AG04449 (cell line): ENCODE measurements at regions of chr11 and their contacts with region 1.

Region 1: GRCh38 chr11:119205574-119206510 is at the start of gene CBL:
- DNase-seq: no peak
- H3K4me3 ChIP-seq: peak within 1 kb of the TSS; percentile 91
- CTCF ChIP-seq: peak; percentile 92

Region 2: DNA sequence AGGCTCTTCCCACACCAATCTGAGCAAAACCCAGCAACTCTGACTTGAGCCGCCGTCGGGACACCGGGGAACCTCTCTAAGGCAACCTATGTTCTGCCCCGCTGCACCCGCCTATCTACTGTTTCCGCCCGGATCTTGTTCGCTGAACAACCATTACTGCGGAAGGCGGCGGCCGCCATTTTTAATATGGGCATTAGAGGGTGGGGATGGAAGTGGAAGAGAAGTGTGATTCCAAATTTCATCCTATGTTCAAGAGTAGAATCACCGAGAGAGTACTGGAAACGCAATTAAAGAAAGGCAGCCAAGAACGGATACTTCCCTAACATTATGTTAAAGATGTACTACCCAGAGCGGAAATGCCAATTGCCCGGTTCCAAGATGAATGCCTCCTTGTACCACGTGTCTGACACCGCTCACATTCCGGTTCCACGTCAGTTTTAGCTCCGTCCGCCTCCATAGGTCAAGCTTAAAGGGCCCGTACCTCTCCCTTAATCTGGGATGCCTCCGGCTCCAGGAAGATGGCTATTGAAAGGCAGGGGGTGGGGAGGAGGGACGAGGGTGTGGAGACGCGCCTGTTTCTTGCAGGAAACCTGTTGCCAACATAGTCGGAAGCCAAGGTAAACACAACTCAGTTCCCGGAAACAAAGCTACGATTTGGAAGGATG is 104.0 kb before region 1 on chr11 and contains the start of gene DPAGT1:
- CTCF ChIA-PET with region 1: interaction called, 23 read pairs
- POLR2A ChIA-PET with region 1: no interaction called
- DNase-seq: peak; percentile 82
- H3K4me3 ChIP-seq: peak within 1 kb of the TSS; percentile 88
- CTCF ChIP-seq: no peak

Region 3: DNA sequence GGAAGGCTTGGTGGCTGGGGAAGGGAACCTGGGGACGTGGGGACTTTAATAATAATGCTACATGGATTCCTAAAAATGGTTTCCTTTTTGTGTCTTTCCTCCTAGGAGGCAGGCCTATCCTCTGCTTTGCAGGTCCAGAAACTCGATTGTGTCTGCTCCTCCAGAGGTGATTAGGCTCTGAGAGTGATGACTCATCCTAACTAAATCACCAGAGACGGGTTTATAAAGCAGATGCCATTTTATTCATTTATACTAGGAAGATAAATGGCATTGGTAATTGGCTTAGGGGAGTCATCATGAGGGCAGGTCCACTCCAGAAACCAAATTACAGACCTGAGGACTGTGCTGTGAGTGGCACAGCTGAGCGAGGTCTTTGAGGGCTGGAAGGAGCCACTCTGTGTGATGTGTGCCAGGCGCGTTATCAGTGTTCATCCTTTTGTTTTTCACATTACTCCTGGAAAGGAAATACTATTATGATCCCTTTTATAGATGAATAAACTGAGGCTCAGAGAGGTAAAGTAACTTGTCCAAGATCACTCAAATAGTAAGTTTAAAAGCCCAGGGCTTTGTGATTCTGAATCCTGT is 30.3 kb before region 1 on chr11:
- CTCF ChIA-PET with region 1: interaction called, 14 read pairs
- POLR2A ChIA-PET with region 1: no interaction called
- DNase-seq: no peak
- H3K4me3 ChIP-seq: no peak overlapping the region
- CTCF ChIP-seq: no peak

Region 4: GRCh38 chr11:119229288-119229672 is 23.4 kb after region 1 on chr11:
- CTCF ChIA-PET with region 1: interaction called, 18 read pairs
- POLR2A ChIA-PET with region 1: no interaction called
- DNase-seq: no peak
- H3K4me3 ChIP-seq: no peak overlapping the region
- CTCF ChIP-seq: no peak

Region 5: GRCh38 chr11:119284344-119285157 is 78.7 kb after region 1 on chr11:
- CTCF ChIA-PET with region 1: interaction called, 34 read pairs
- POLR2A ChIA-PET with region 1: no interaction called
- DNase-seq: no peak
- H3K4me3 ChIP-seq: no peak overlapping the region
- CTCF ChIP-seq: peak; percentile 31

Region 6: GRCh38 chr11:119306373-119306890 is 100.6 kb after region 1 on chr11:
- CTCF ChIA-PET with region 1: interaction called, 18 read pairs
- POLR2A ChIA-PET with region 1: no interaction called
- DNase-seq: peak; percentile 44
- H3K4me3 ChIP-seq: no peak overlapping the region
- CTCF ChIP-seq: no peak

Region 7: GRCh38 chr11:119334174-119334930 is 128.5 kb after region 1 on chr11 and contains the start of gene RNF26:
- CTCF ChIA-PET with region 1: interaction called, 47 read pairs
- POLR2A ChIA-PET with region 1: no interaction called
- DNase-seq: peak; percentile 88
- H3K4me3 ChIP-seq: peak within 1 kb of the TSS; percentile 97
- CTCF ChIP-seq: no peak

Region 8: DNA sequence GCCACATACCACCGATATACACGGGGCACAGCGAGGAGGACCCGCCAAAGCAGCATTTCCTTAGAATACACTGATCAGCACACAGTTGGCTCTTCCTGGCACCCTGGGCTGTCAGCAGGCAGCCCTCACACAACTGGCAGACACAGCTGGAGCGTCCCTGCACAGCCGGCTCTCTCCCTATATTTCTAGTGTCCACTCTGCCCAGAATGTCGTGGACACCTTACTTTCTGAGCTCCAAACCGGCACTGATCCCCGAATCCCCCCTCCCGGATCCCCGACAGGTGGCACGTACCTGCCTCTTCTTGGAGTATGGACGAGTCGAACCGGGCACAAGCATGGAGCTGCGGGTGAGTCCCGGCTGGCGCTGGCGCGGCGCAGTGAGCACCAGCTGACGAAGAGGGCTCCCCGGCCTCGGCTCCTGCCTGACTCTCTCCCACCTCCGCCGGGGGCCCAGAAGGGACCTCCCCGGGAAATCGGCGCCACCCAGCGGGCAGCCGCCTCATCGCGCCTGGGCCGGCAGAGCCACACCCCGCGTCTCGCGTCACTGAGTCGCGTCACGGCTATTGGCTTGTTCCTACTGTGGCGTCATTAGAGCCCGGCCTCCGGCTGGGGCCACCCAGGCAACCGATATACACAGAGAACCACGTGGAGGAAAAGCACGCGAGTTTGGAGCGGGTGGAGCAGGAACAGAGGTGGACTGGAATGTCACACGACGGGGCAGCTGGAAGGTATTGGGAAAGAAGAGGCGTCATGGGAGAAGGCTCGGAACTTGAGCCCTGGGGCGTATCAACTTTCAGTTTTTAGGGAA is 175.5 kb after region 1 on chr11 and contains the start of gene USP2:
- CTCF ChIA-PET with region 1: no interaction called
- POLR2A ChIA-PET with region 1: no interaction called
- DNase-seq: peak; percentile 63
- H3K4me3 ChIP-seq: peak within 1 kb of the TSS; percentile 64
- CTCF ChIP-seq: peak; percentile 96